ENCODE measurements at regions of chr22 and their contacts with region 1.

Region 1: DNA sequence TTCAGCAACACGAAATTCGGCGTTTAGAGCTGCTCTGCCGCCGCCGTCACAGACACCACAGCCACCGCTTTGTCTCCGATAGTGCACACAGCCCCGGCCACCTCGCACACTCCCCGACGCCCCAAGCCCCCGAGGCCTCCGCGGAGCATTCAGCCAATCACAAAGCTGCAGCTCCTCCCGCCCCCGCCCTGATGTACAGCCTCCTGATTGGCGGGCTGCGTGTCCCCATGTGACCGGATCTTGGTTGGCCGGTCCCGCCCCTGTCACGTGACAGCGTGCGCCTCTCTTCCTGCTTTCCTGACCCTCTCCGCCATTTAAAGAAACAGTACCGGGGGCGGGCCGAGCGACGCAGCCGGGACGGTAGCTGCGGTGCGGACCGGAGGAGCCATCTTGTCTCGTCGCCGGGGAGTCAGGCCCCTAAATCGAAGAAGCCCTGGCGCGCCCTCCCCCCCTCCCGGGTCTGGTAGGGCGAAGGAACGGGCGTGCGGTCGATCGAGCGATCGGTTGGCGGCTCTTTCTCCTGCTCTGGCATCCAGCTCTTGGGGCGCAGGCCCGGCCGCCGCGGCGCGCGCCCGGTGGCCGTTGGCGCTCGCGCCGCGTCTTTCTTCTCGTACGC is at the start of gene TUG1:
- DNase-seq: peak; percentile 99
- H3K4me3 ChIP-seq: peak within 1 kb of the TSS; percentile 91
- H3K27ac ChIP-seq: peak within 1 kb of the TSS; percentile 97
- H3K4me1 ChIP-seq: no peaks in the 10 kb centered on the region
- H3K27me3 ChIP-seq: no peaks in the 10 kb centered on the region
- CTCF ChIP-seq: peak in 1 of 4 experiments; percentile 23
- POLR2A ChIP-seq: peak; percentile 95
- total RNA-seq, gene TUG1: 58.7 to 113 TPM

Region 2: DNA sequence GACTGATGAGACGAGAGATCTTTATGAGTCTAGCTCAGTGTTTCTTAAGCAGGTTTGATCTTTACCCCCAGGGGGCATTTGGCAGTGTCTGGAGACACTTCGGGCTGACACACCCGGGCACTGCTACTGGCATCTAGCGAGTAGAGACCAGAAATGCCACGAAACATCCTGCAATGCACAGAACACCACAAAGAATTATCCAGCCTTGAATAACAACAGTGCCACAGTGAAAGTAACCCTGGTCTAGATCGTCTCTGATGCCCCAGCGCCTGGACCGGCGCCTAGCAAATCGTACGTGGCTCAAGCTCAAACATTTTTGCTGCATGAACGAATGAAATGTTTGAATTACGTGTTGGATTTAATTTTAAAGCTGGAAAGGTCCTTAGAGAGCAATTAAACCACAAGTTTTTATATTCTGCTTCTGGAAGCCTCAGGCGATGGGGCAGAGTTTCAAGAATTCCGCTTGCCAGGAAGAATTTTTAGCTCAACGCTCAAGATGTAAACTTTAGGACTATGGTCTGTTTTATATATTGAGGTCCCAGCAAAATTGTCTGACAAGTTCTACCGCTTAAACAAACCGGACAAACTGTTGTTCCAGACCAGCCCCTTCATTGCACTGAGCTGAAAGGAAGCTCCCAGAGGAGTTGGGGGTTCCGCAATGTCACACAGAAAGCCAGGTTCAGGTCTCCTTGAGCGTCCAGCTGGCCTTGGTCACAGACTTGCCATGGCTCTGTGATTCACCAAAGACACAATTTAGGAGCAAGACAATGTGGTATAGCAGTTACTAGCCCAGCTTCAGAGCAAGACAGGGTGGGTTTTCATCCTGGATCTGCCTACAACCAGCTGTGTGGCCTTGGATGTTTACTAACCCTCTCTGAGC is 67.9 kb after region 1 on chr22:
- intact Hi-C with region 1: loop called (anchors 5 kb)
- DNase-seq: no peak
- H3K4me3 ChIP-seq: peak overlapping the region in 1 of 2 donors; percentile 8
- H3K27ac ChIP-seq: peak overlapping the region; percentile 48 to 54
- H3K4me1 ChIP-seq: peaks cover 6% of the 10 kb centered on the region
- H3K27me3 ChIP-seq: no peaks in the 10 kb centered on the region
- CTCF ChIP-seq: no peak
- POLR2A ChIP-seq: no peak

Region 3: GRCh38 chr22:31055635-31056159 is 86.7 kb after region 1 on chr22:
- intact Hi-C with region 1: loop called (anchors 2 kb)
- DNase-seq: peak; percentile 94
- H3K4me3 ChIP-seq: no peak overlapping the region
- H3K27ac ChIP-seq: peak overlapping the region; percentile 68 to 82
- H3K4me1 ChIP-seq: peaks cover 7% of the 10 kb centered on the region
- H3K27me3 ChIP-seq: no peaks in the 10 kb centered on the region
- CTCF ChIP-seq: no peak
- POLR2A ChIP-seq: peak; percentile 10

Region 4: DNA sequence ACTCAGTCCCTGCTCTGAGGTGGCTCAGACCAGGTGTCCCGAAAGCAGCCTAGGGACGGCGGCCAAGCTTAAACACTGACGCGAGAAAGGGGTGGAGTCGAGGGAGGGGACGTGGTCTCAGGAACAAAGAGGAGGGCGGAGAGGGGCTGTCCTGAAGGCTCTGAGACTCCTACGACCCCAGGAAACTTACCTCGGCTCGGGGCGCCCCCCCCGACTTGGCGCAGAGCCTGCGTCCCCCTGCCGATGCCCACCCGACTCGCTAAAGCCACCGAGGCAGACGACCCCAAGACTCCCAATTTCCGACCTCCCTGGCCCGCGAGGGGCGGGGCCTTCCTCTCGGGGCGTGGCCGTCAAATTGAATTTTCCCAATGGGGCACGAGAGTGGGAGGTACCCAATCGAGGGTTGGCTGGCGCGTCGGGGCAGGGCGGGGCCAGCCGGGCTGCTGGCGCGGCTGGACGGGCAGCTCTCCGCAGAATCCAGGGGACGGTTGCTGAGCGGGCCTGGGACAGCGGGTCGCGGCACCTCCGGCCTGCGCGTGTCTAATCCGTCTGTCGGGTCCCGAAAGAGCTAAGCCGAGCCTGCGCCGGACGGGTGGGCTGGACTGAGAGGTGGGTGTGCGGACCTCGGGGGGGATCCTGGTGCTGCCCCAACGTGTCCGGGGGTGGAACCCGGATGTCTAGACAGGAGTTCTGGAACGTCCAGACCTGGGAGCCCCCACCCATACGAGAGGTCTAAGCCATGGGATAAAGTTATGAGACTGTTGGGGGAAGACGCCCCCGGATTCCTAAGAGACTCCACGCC is 112.0 kb after region 1 on chr22 and contains the start of gene SMTN:
- intact Hi-C with region 1: loop called (anchors 2 kb)
- DNase-seq: peak; percentile 94
- H3K4me3 ChIP-seq: peak within 1 kb of the TSS; percentile 61 to 69
- H3K27ac ChIP-seq: peak within 1 kb of the TSS; percentile 90
- H3K4me1 ChIP-seq: peaks cover 11% of the 10 kb centered on the region
- H3K27me3 ChIP-seq: no peaks in the 10 kb centered on the region
- CTCF ChIP-seq: peak in 2 of 4 experiments; percentile 20 to 26
- POLR2A ChIP-seq: peak; percentile 100
- total RNA-seq, gene SMTN: 200 to 209 TPM